Activated naive CD4-positive, alpha-beta T cell treated with anti-CD3 and anti-CD28 coated beads for 36 hours (primary cell): ENCODE measurements at regions of chr17 and their contacts with region 1.

Region 1: DNA sequence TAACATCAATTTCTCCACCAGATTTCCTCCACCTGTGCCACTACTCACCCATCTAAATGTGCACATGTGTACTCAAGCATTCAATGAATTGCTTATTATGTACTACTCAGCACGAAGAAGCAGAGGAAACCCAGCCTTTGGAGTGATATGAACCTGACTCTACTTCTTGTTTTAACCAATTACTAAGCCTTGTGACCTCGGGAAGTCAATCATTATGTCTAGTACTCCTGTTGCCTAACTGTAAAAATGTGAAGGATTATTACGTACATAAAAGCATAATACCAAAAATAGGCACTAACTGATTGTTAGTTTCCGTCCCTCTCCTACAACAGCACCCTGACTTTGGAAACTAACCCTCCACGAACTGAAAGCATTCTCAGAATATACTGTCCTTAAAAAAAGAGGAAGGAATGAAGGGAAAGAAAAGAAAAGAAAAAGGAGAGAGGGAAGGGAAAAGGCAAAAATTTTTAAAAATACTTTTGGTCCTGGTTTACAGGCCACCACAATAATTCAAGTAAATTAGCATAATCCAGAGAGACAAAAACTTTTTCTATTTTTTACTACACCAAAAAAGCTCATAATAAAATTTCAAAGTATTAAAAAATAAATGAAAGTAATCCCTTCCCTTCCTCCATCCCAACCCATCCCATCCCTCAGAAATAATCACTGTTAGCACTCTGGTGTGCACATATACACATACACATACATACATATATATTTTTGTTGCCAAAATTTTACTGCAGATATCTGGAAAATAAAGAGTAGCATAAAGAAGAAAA is 53.6 kb downstream of the KANSL1 start:
- DNase-seq: no peak
- H3K4me3 Mint-ChIP-seq: no peak overlapping the region
- H3K27ac Mint-ChIP-seq: no peak overlapping the region
- H3K4me1 Mint-ChIP-seq: peaks cover 90% of the 10 kb centered on the region
- H3K27me3 Mint-ChIP-seq: no peaks in the 10 kb centered on the region

Region 2: DNA sequence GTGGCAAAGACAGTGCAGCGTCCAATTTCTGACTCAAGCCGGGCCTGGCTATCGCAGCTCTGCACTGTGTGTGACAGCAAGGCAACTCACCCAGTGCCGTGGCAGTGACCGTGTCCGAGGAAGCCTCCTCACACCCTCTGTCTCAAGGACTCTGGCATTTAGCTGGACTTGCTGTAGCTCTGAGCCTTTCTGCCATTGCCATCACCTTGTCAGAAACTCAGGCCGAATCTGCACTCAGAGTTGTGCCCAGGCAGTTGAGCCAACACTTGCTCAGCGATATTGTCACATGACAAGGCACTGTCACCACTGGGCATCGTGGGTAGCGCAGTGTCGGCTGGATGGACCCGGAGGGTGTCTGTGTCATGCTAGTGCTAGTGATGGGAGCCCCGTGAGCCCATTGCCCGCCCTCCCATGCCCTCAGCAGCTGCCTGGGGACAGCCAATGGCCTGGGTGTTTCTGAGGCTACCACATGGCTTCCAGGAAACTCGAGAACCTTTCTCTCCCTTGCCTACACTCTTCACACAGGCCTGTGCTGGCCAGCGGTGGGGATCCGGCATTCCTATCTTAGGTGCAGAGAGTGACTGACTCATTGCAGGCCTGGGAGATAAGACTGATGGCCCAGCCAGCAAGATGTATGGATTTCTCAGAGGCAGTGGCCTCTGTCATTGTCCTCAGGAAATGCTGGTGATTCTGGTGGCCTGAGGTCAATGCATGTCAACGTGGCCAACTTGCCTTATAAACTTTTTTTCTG is 162.7 kb before region 1 on chr17:
- CTCF ChIA-PET with region 1: no interaction called
- intact Hi-C with region 1: no loop called
- DNase-seq: no peak
- H3K4me3 Mint-ChIP-seq: no peak overlapping the region
- H3K27ac Mint-ChIP-seq: no peak overlapping the region
- H3K4me1 Mint-ChIP-seq: no peaks in the 10 kb centered on the region
- H3K27me3 Mint-ChIP-seq: no peaks in the 10 kb centered on the region

Region 3: DNA sequence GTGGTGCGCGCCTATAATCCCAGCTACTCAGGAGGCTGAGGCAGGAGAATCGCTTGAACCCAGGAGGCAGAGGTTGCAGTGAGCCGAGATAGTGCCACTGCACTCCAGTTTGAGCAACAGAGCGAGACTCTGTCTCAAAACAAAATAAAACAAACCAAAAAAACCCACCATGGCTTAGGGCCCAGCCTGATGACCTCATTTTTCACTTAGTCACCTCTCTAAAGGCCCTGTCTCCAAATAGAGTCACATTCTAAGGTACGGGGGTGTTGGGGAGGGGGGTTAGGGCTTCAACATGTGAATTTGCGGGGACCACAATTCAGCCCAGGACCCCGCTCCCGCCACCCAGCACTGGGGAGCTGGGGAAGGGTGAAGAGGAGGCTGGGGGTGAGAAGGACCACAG is 142.0 kb before region 1 on chr17:
- CTCF ChIA-PET with region 1: no interaction called
- intact Hi-C with region 1: no loop called
- DNase-seq: no peak
- H3K4me3 Mint-ChIP-seq: no peak overlapping the region
- H3K27ac Mint-ChIP-seq: no peak overlapping the region
- H3K4me1 Mint-ChIP-seq: no peaks in the 10 kb centered on the region
- H3K27me3 Mint-ChIP-seq: no peaks in the 10 kb centered on the region

Region 4: GRCh38 chr17:46056800-46057304 is 82.8 kb before region 1 on chr17:
- CTCF ChIA-PET with region 1: interaction called, 3 read pairs
- intact Hi-C with region 1: loop called (anchors 5 kb)
- DNase-seq: no peak
- H3K4me3 Mint-ChIP-seq: no peak overlapping the region
- H3K27ac Mint-ChIP-seq: no peak overlapping the region
- H3K4me1 Mint-ChIP-seq: peaks cover 49% of the 10 kb centered on the region
- H3K27me3 Mint-ChIP-seq: no peaks in the 10 kb centered on the region

Region 5: DNA sequence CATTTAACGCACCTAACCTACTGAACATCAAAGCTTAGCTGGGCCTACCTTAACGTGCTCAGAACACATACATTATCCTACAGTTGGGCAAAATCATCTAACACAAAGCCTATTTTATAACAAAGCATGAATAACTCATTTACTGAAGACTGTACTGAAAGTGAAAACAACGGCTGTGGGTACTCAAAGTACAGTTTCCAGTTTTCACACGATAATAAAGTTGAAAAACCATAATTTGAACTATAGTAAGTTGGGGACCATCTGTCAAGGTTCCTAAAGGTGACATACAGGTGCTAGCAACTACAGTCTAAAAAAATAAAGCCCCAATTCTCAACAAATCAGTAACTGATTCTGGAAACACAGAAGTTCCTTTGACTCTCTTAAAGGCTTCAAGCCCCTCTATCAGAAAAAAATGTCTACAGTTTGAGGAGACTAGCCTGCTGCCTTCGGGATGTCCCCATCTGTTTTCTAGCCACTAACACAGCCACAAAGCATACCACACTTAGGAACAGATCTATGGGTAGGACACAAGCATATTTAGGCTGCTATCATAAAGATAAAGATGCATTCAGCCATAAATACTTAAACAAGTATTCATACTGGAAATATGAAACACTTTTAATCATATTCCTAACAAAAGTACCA is 17.7 kb before region 1 on chr17:
- CTCF ChIA-PET with region 1: no interaction called
- intact Hi-C with region 1: loop called (anchors 1 kb)
- DNase-seq: no peak
- H3K4me3 Mint-ChIP-seq: peak overlapping the region; percentile 15
- H3K27ac Mint-ChIP-seq: peak overlapping the region; percentile 31
- H3K4me1 Mint-ChIP-seq: peaks cover 81% of the 10 kb centered on the region
- H3K27me3 Mint-ChIP-seq: no peaks in the 10 kb centered on the region

Region 6: DNA sequence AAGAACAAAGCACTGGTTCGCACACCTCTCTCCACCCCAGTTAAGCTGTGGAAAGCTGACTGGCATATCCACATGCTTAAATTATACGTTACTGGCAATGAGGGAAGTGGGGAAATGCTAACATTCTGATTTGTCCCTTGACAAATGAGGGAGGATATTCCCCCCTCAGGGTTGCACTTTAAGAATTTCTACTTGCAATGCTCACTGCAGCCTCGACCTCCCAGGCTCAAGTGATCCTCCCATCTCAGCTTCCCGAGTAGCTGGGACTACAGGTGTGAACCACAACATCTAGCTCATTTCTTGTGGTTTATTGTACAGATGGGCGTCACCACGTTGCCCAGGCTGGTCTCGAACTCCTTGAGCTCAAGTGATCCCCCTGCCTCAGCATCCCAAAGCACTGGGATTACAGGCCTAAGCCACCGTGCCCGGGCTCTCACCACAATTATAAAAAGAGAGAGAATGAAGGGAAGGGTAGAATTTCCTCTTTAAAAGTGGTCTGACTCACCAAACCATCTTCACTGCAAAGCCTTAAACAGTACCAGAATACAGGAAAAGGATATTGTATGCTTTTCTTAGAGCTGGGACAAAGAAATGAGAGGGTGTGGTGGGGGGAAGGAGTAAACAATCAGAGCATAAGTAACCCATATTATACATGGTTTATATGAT is 14.7 kb after region 1 on chr17:
- CTCF ChIA-PET with region 1: interaction called, 30 read pairs
- intact Hi-C with region 1: loop called (anchors 1 kb)
- DNase-seq: peak; percentile 61
- H3K4me3 Mint-ChIP-seq: peak overlapping the region; percentile 38
- H3K27ac Mint-ChIP-seq: peak overlapping the region; percentile 59
- H3K4me1 Mint-ChIP-seq: peaks cover 89% of the 10 kb centered on the region
- H3K27me3 Mint-ChIP-seq: no peaks in the 10 kb centered on the region

Region 7: DNA sequence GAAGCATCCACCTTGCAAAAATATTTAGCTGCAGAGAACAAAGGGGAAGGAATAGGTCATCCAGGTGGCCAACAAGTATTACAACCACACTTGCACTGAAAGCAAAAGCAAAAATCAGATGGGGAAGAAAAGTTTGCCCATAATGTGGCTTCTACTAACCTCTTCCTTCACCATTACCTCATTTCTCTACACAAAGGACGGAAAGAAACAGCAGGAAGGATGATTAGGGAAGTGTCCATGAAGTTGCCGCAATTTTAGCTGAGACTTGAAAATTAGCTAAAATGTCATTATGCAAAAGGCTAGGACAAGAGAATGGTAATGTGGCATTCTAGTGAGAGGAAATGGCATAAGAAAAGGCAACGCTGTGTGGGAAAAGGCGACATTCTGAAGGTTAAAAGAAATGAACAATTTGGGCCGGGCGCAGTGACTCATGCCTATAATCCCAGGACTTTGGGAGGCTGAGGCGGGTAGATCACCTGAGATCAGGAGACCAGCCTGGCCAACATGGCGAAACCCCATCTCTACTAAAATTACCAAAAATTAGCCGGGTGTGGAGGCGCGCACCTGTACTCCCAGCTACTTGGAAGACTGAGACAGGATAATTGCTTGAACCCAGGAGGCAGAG is 39.9 kb after region 1 on chr17:
- CTCF ChIA-PET with region 1: interaction called, 16 read pairs
- intact Hi-C with region 1: no loop called
- DNase-seq: no peak
- H3K4me3 Mint-ChIP-seq: peak overlapping the region; percentile 42
- H3K27ac Mint-ChIP-seq: peak overlapping the region; percentile 77
- H3K4me1 Mint-ChIP-seq: peaks cover 91% of the 10 kb centered on the region
- H3K27me3 Mint-ChIP-seq: no peaks in the 10 kb centered on the region